CD4-positive, alpha-beta memory T cell (primary cell): ENCODE measurements at regions of chr17 and their contacts with region 1.

Region 1: GRCh38 chr17:75524953-75525719 is at the start of gene LLGL2:
- DNase-seq: peak; percentile 84 to 91 (median 90)
- H3K4me3 ChIP-seq: peak within 1 kb of the TSS; percentile 36 to 74
- H3K4me3 Mint-ChIP-seq: peak within 1 kb of the TSS; percentile 82 to 87 (median 84)
- H3K27ac ChIP-seq: peak within 1 kb of the TSS; percentile 56
- H3K27ac Mint-ChIP-seq: peak within 1 kb of the TSS; percentile 52 to 75 (median 67)
- H3K4me1 ChIP-seq: peaks cover 24% of the 10 kb centered on the region
- H3K4me1 Mint-ChIP-seq: peaks cover 8 to 17% (median 12%) of the 10 kb centered on the region in 4 donors
- H3K27me3 ChIP-seq: no peaks in the 10 kb centered on the region
- H3K27me3 Mint-ChIP-seq: no peaks in the 10 kb centered on the region
- total RNA-seq, gene LLGL2: 40.1 to 43.6 TPM

Region 2: GRCh38 chr17:75456417-75457046 is 68.6 kb before region 1 on chr17 and contains the start of gene TMEM94:
- CTCF ChIA-PET with region 1: interaction called, 3 read pairs
- POLR2A ChIA-PET with region 1: interaction called, 22 read pairs
- intact Hi-C with region 1: no loop called
- DNase-seq: peak; percentile 90 to 94 (median 92)
- H3K4me3 ChIP-seq: peak within 1 kb of the TSS; percentile 94 to 95
- H3K4me3 Mint-ChIP-seq: peak within 1 kb of the TSS; percentile 93 to 99 (median 95)
- H3K27ac ChIP-seq: peak within 1 kb of the TSS; percentile 67
- H3K27ac Mint-ChIP-seq: peak within 1 kb of the TSS; percentile 90 to 98 (median 96)
- H3K4me1 ChIP-seq: peaks cover 18% of the 10 kb centered on the region
- H3K4me1 Mint-ChIP-seq: peaks cover 20 to 35% (median 30%) of the 10 kb centered on the region in 4 donors
- H3K27me3 ChIP-seq: no peaks in the 10 kb centered on the region
- H3K27me3 Mint-ChIP-seq: no peaks in the 10 kb centered on the region
- total RNA-seq, gene TMEM94: 109 TPM

Region 3: GRCh38 chr17:75504347-75504964 is 20.7 kb before region 1 on chr17:
- CTCF ChIA-PET with region 1: interaction called, 3 read pairs
- POLR2A ChIA-PET with region 1: interaction called, 3 read pairs
- intact Hi-C with region 1: loop called (anchors 1 kb)
- DNase-seq: peak in 4 of 5 donors; percentile 23 to 34 (median 30)
- H3K4me3 ChIP-seq: no peak overlapping the region
- H3K4me3 Mint-ChIP-seq: no peak overlapping the region
- H3K27ac ChIP-seq: no peak overlapping the region
- H3K27ac Mint-ChIP-seq: no peak overlapping the region
- H3K4me1 ChIP-seq: no peaks in the 10 kb centered on the region
- H3K4me1 Mint-ChIP-seq: no peaks in the 10 kb centered on the region
- H3K27me3 ChIP-seq: no peaks in the 10 kb centered on the region
- H3K27me3 Mint-ChIP-seq: no peaks in the 10 kb centered on the region

Region 4: GRCh38 chr17:75571197-75571873 is 46.2 kb after region 1 on chr17:
- CTCF ChIA-PET with region 1: no interaction called
- POLR2A ChIA-PET with region 1: no interaction called
- intact Hi-C with region 1: no loop called
- DNase-seq: no peak
- H3K4me3 ChIP-seq: no peak overlapping the region
- H3K4me3 Mint-ChIP-seq: no peak overlapping the region
- H3K27ac ChIP-seq: no peak overlapping the region
- H3K27ac Mint-ChIP-seq: no peak overlapping the region
- H3K4me1 ChIP-seq: no peaks in the 10 kb centered on the region
- H3K4me1 Mint-ChIP-seq: no peaks in the 10 kb centered on the region
- H3K27me3 ChIP-seq: no peaks in the 10 kb centered on the region
- H3K27me3 Mint-ChIP-seq: no peaks in the 10 kb centered on the region

Region 5: GRCh38 chr17:75589012-75589918 is 64.1 kb after region 1 on chr17:
- CTCF ChIA-PET with region 1: no interaction called
- POLR2A ChIA-PET with region 1: interaction called, 16 read pairs
- intact Hi-C with region 1: loop called (anchors 2 kb)
- DNase-seq: peak; percentile 85 to 93 (median 92)
- H3K4me3 ChIP-seq: peak overlapping the region in 1 of 2 donors; percentile 41
- H3K4me3 Mint-ChIP-seq: peak overlapping the region; percentile 68 to 83 (median 78)
- H3K27ac ChIP-seq: no peak overlapping the region
- H3K27ac Mint-ChIP-seq: peak overlapping the region in 5 of 7 donors; percentile 57 to 88 (median 86)
- H3K4me1 ChIP-seq: peaks cover 18% of the 10 kb centered on the region
- H3K4me1 Mint-ChIP-seq: peaks cover 0 to 6% (median 3%) of the 10 kb centered on the region in 4 donors
- H3K27me3 ChIP-seq: no peaks in the 10 kb centered on the region
- H3K27me3 Mint-ChIP-seq: peaks cover 0 to 4% of the 10 kb centered on the region in 2 donors

Region 6: DNA sequence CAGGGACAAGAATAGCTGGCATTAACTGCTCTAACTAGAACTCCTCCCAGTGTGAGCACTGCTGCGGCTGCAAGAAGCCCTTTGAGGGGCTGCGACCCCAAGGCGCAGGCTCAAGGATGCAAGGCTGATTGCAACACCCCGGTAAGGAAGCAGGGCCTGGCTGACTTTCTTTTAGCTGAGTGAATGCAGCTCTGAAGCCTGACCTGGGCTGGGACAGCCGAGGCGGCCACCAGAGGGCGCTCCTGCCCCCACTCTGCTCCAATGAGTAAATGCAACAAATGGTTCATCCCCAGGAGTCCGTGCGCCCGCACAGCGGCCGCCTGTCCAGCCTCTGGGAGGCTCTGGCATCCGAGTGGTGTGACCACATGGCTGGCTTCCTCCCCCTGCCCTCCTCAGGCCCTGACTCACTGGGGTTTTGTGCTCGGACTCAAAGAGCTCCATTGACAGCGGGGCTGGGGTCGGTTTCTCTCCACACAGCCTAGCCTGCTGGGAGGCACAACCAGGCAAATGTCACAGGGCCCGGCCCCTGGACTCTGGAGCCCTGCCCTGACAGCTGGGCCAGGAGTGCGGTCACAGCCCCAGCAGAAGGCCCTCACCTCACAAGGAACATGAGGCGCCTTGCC is 107.8 kb after region 1 on chr17 and contains the start of gene SMIM5:
- CTCF ChIA-PET with region 1: no interaction called
- POLR2A ChIA-PET with region 1: no interaction called
- intact Hi-C with region 1: no loop called
- DNase-seq: peak; percentile 72 to 77 (median 75)
- H3K4me3 ChIP-seq: no peak within 1 kb of the TSS
- H3K4me3 Mint-ChIP-seq: peak within 1 kb of the TSS in 1 of 8 donors; percentile 26
- H3K27ac ChIP-seq: no peak within 1 kb of the TSS
- H3K27ac Mint-ChIP-seq: peak within 1 kb of the TSS in 1 of 7 donors; percentile 18
- H3K4me1 ChIP-seq: peaks cover 13% of the 10 kb centered on the region
- H3K4me1 Mint-ChIP-seq: peaks cover 2 to 13% (median 7%) of the 10 kb centered on the region in 4 donors
- H3K27me3 ChIP-seq: no peaks in the 10 kb centered on the region
- H3K27me3 Mint-ChIP-seq: no peaks in the 10 kb centered on the region
- total RNA-seq, gene SMIM5: not detected